ENCODE measurements at regions of chr16 and their contacts with region 1.

Region 1: GRCh38 chr16:85615852-85616606 is 2.9 kb downstream of the GSE1 start:
- DNase-seq: peak; percentile 68 to 88 (median 83)
- H3K4me3 ChIP-seq: peak overlapping the region; percentile 55
- H3K4me3 Mint-ChIP-seq: peak overlapping the region; percentile 76 to 94 (median 82)
- H3K27ac ChIP-seq: peak overlapping the region; percentile 69
- H3K27ac Mint-ChIP-seq: peak overlapping the region; percentile 61 to 90 (median 82)
- H3K4me1 ChIP-seq: peaks cover 36% of the 10 kb centered on the region
- H3K4me1 Mint-ChIP-seq: peaks cover 32 to 63% (median 49%) of the 10 kb centered on the region in 3 donors
- H3K27me3 ChIP-seq: no peaks in the 10 kb centered on the region
- H3K27me3 Mint-ChIP-seq: no peaks in the 10 kb centered on the region

Region 2: DNA sequence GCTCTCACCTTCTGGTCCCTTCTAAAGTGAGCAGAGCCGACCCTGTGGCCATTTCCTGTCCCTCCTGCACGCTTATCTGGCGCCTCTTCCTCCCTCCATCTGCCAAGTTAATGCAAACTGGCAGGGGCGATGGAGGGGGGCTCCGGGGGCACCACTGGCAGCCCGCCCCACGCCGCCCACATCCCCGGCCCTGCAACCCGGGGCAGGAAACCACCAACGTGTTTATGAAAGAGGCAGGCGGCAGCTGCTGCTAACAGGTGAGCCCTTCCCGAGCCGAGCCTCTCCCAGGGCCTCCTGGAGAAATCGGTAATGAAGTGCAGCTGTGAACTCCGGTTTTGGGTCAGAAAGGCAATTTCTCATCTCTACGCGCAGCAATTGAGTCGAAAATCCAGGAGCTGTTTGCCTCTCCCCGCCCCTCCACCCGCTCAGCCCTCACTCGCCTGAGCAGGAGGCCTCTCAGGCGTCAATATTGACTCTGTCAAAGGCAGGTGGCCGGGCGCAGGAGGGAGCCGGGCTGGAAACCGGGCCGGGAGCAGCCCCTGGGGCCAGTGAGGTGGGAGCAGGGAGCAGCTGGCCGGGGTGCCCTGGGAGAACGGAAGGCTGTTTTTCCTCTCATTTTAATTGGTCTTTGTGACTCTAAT is 167.4 kb before region 1 on chr16:
- CTCF ChIA-PET with region 1: interaction called, 25 read pairs
- POLR2A ChIA-PET with region 1: interaction called, 3 read pairs
- DNase-seq: peak; percentile 20 to 83 (median 66)
- H3K4me3 ChIP-seq: peak overlapping the region; percentile 19
- H3K4me3 Mint-ChIP-seq: peak overlapping the region; percentile 25 to 79 (median 77)
- H3K27ac ChIP-seq: no peak overlapping the region
- H3K27ac Mint-ChIP-seq: peak overlapping the region; percentile 85 to 93 (median 90)
- H3K4me1 ChIP-seq: peaks cover 42% of the 10 kb centered on the region
- H3K4me1 Mint-ChIP-seq: peaks cover 26 to 49% (median 36%) of the 10 kb centered on the region in 3 donors
- H3K27me3 ChIP-seq: no peaks in the 10 kb centered on the region
- H3K27me3 Mint-ChIP-seq: peaks cover 0 to 2% of the 10 kb centered on the region in 2 donors

Region 3: DNA sequence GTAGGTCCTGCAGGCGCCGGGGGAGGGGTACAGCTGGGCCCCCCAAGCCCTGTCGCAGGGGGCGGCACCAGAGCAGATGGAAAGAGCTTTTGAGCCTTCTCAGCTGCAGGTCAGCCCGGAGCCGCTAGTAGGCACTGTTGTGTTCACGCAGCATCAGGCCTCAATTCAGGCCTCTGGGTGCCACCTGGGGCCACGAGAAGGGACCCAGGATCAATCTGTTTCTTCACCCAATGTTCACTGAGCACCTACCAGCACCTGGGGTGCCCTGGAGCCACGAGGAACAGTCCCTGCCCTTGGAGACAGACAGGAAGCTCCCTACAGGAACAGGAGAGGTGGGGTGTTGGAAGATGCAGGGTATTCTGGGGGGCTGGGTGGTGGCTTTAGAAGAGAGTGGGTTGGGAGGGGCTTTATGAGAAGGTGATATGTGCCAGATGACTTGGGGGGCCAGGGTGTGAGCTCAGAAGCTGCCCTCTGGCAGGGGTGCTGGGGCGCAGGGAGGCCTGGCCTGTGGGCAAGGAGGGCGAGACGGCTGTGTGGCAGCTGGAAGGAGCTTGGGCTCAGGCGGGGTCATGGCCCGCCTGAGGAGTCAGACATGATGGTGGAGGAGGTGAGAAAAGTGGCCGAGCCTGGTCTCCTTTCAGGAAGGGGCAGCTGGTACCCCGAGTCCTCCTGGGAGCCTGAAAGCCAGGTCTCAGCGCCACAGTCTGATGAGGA is 124.8 kb before region 1 on chr16:
- CTCF ChIA-PET with region 1: interaction called, 17 read pairs
- POLR2A ChIA-PET with region 1: no interaction called
- DNase-seq: peak; percentile 16 to 52 (median 19)
- H3K4me3 ChIP-seq: no peak overlapping the region
- H3K4me3 Mint-ChIP-seq: peak overlapping the region in 1 of 7 donors; percentile 15
- H3K27ac ChIP-seq: no peak overlapping the region
- H3K27ac Mint-ChIP-seq: peak overlapping the region in 1 of 8 donors; percentile 56
- H3K4me1 ChIP-seq: no peaks in the 10 kb centered on the region
- H3K4me1 Mint-ChIP-seq: peaks cover 0 to 9% (median 2%) of the 10 kb centered on the region in 3 donors
- H3K27me3 ChIP-seq: no peaks in the 10 kb centered on the region
- H3K27me3 Mint-ChIP-seq: no peaks in the 10 kb centered on the region

Region 4: GRCh38 chr16:85554112-85554813 is 61.8 kb before region 1 on chr16:
- CTCF ChIA-PET with region 1: interaction called, 50 read pairs
- POLR2A ChIA-PET with region 1: interaction called, 32 read pairs
- DNase-seq: peak; percentile 63 to 88 (median 75)
- H3K4me3 ChIP-seq: peak overlapping the region; percentile 91
- H3K4me3 Mint-ChIP-seq: peak overlapping the region; percentile 88 to 97 (median 95)
- H3K27ac ChIP-seq: peak overlapping the region; percentile 95
- H3K27ac Mint-ChIP-seq: peak overlapping the region; percentile 91 to 96 (median 94)
- H3K4me1 ChIP-seq: peaks cover 14% of the 10 kb centered on the region
- H3K4me1 Mint-ChIP-seq: peaks cover 36 to 49% (median 37%) of the 10 kb centered on the region in 3 donors
- H3K27me3 ChIP-seq: no peaks in the 10 kb centered on the region
- H3K27me3 Mint-ChIP-seq: peaks cover 0 to 3% of the 10 kb centered on the region in 2 donors

Region 5: DNA sequence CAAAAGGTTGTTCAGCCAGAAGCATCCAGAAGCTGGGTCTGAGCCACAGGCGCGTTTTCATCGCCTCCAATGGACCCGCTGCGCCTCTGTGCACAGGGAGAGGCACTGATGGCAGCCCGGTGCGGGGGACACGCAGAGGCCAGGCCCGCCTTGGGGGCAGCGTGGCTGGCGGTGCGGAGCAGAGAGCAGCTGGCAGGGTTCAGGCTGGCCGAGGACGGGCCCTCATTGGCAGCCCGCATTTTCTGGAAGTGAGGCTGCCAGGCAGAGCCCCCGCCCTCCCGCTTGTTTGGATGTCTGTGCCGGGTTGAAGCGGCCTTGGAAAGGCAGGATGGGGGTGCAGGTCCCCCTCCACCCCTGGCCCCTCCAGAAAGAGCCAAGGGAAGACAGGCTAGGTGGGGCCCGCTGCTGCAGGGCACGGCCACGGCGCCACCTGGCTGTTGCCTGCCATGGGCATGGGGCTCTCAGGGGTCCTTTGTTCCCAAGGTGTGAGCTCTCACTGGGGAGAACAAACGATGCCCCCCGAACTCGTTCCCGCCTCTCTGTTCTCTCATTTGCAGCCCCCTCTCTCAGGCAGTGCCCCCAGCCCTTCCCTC is 15.9 kb after region 1 on chr16:
- CTCF ChIA-PET with region 1: interaction called, 16 read pairs
- POLR2A ChIA-PET with region 1: no interaction called
- DNase-seq: no peak
- H3K4me3 ChIP-seq: no peak overlapping the region
- H3K4me3 Mint-ChIP-seq: no peak overlapping the region
- H3K27ac ChIP-seq: no peak overlapping the region
- H3K27ac Mint-ChIP-seq: peak overlapping the region in 2 of 8 donors; percentile 26 to 47
- H3K4me1 ChIP-seq: no peaks in the 10 kb centered on the region
- H3K4me1 Mint-ChIP-seq: peaks cover 19 to 49% (median 22%) of the 10 kb centered on the region in 3 donors
- H3K27me3 ChIP-seq: no peaks in the 10 kb centered on the region
- H3K27me3 Mint-ChIP-seq: no peaks in the 10 kb centered on the region